CD8-positive, alpha-beta T cell (primary cell): ENCODE measurements at regions of chr5 and their contacts with region 1.

Region 1: GRCh38 chr5:138575194-138576015 is at the start of gene HSPA9:
- DNase-seq: peak; percentile 91 to 100 (median 97)
- ATAC-seq: peak; percentile 82
- H3K4me3 ChIP-seq: peak within 1 kb of the TSS; percentile 77 to 80
- H3K4me3 Mint-ChIP-seq: peak within 1 kb of the TSS; percentile 99
- H3K27ac ChIP-seq: peak within 1 kb of the TSS; percentile 98 to 99
- H3K27ac Mint-ChIP-seq: peak within 1 kb of the TSS; percentile 100
- H3K4me1 ChIP-seq: peaks cover 21% of the 10 kb centered on the region
- H3K4me1 Mint-ChIP-seq: peaks cover 43% of the 10 kb centered on the region
- H3K27me3 ChIP-seq: no peaks in the 10 kb centered on the region
- H3K27me3 Mint-ChIP-seq: no peaks in the 10 kb centered on the region
- CTCF ChIP-seq: no peak
- total RNA-seq, gene HSPA9: 464 to 500 TPM

Region 2: GRCh38 chr5:138213161-138214029 is 362.0 kb before region 1 on chr5 and contains the start of gene CDC23:
- CTCF ChIA-PET with region 1: no interaction called
- POLR2A ChIA-PET with region 1: no interaction called
- intact Hi-C with region 1: loop called in 1 of 2 experiments (anchors 10 kb)
- DNase-seq: peak; percentile 76 to 97 (median 89)
- ATAC-seq: peak; percentile 97
- H3K4me3 ChIP-seq: peak within 1 kb of the TSS; percentile 91 to 93
- H3K4me3 Mint-ChIP-seq: peak within 1 kb of the TSS; percentile 100
- H3K27ac ChIP-seq: peak within 1 kb of the TSS; percentile 81 to 86
- H3K27ac Mint-ChIP-seq: peak within 1 kb of the TSS; percentile 98
- H3K4me1 ChIP-seq: peaks cover 18% of the 10 kb centered on the region
- H3K4me1 Mint-ChIP-seq: peaks cover 21% of the 10 kb centered on the region
- H3K27me3 ChIP-seq: no peaks in the 10 kb centered on the region
- H3K27me3 Mint-ChIP-seq: peaks cover 2% of the 10 kb centered on the region
- CTCF ChIP-seq: no peak
- total RNA-seq, gene CDC23: 18.2 to 20.5 TPM

Region 3: DNA sequence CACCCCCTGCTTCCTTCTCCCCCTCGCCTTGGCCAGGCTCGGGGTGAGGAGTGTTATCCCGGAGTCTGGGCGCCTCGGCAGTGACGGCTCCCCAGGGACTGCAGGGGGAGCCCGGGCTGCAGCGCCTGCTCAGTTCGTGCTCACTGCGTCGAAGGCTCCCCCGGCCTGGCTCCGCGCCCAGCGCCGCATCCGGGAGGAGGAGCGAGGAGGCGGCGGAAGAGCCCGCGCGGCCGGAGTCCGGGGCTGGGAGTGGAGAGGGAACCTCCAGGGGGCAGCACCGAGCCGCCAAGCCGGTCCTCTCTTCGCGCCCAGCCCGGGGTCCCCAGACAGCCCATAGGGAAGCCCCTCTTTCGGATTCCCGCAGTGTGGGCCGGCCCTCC is 111.4 kb before region 1 on chr5:
- CTCF ChIA-PET with region 1: interaction called, 4 read pairs
- POLR2A ChIA-PET with region 1: interaction called, 12 read pairs
- intact Hi-C with region 1: loop called (anchors 1 kb)
- DNase-seq: peak; percentile 85 to 98 (median 93)
- ATAC-seq: peak; percentile 47
- H3K4me3 ChIP-seq: peak overlapping the region; percentile 91 to 97
- H3K4me3 Mint-ChIP-seq: peak overlapping the region; percentile 91
- H3K27ac ChIP-seq: peak overlapping the region; percentile 79 to 100
- H3K27ac Mint-ChIP-seq: peak overlapping the region; percentile 93
- H3K4me1 ChIP-seq: peaks cover 51% of the 10 kb centered on the region
- H3K4me1 Mint-ChIP-seq: peaks cover 48% of the 10 kb centered on the region
- H3K27me3 ChIP-seq: no peaks in the 10 kb centered on the region
- H3K27me3 Mint-ChIP-seq: no peaks in the 10 kb centered on the region
- CTCF ChIP-seq: peak; percentile 87

Region 4: GRCh38 chr5:138654281-138654867 is 79.0 kb after region 1 on chr5:
- CTCF ChIA-PET with region 1: interaction called, 3 read pairs
- POLR2A ChIA-PET with region 1: interaction called, 3 read pairs
- intact Hi-C with region 1: loop called (anchors 5 kb)
- DNase-seq: peak; percentile 41 to 89 (median 64)
- ATAC-seq: peak; percentile 87
- H3K4me3 ChIP-seq: no peak overlapping the region
- H3K4me3 Mint-ChIP-seq: no peak overlapping the region
- H3K27ac ChIP-seq: no peak overlapping the region
- H3K27ac Mint-ChIP-seq: peak overlapping the region; percentile 76
- H3K4me1 ChIP-seq: peaks cover 20% of the 10 kb centered on the region
- H3K4me1 Mint-ChIP-seq: peaks cover 26% of the 10 kb centered on the region
- H3K27me3 ChIP-seq: peaks cover 55 to 57% of the 10 kb centered on the region in 2 experiments
- H3K27me3 Mint-ChIP-seq: peaks cover 87% of the 10 kb centered on the region
- CTCF ChIP-seq: no peak

Region 5: DNA sequence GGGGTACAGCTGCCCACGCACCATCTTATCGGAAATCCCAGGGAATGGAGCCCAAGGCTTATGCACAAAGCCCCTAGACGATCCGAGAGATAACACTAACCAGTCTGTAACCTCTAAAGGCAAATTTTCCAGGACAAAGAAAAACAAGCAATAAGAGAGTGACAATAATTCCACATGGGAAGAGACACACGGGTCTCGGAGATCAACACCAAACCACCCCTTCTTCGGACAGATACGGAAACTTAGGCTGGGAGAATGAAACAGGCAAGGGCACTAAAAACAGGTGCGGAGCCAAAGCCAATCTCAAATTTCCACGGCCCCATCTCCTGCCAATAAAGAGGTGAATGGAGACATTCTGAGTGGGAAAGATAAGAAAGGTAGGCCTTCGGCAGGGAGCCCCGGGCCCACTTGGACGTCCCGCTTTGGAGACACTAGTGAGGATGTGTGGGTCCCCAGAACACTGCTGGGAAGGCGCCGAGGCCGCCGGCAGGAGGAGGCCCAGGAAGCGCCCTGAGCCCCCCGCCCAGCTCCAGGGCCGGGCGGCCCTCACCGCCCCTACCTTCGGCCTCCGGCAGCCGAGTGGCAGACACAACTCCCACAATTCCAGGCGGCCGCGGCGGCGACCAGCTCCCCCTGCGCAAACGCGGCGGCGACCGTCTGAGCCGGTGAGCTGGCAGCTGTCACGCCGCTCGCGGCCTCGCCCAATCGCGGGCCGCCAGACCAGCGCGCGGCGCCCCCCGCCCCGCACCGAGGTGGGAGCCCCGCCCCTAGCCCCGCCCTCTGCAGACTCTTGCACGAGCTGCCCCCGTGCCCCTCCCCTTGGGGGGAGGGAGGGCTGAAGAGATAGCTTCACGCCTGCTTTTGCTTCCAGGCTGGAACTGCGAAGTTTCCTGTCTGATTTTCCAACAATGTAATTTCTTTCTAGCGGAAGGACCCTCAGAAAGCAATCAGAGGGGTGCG is 622.6 kb after region 1 on chr5 and contains the start of gene SIL1:
- CTCF ChIA-PET with region 1: no interaction called
- POLR2A ChIA-PET with region 1: no interaction called
- intact Hi-C with region 1: loop called (anchors 1 to 5 kb)
- DNase-seq: peak; percentile 94 to 98 (median 96)
- ATAC-seq: peak; percentile 98
- H3K4me3 ChIP-seq: peak within 1 kb of the TSS; percentile 60 to 70
- H3K4me3 Mint-ChIP-seq: peak within 1 kb of the TSS; percentile 84
- H3K27ac ChIP-seq: peak within 1 kb of the TSS; percentile 82 to 84
- H3K27ac Mint-ChIP-seq: peak within 1 kb of the TSS; percentile 91
- H3K4me1 ChIP-seq: peaks cover 8% of the 10 kb centered on the region
- H3K4me1 Mint-ChIP-seq: peaks cover 24% of the 10 kb centered on the region
- H3K27me3 ChIP-seq: no peaks in the 10 kb centered on the region
- H3K27me3 Mint-ChIP-seq: no peaks in the 10 kb centered on the region
- CTCF ChIP-seq: no peak
- total RNA-seq, gene SIL1: 14.0 to 19.5 TPM

Region 6: DNA sequence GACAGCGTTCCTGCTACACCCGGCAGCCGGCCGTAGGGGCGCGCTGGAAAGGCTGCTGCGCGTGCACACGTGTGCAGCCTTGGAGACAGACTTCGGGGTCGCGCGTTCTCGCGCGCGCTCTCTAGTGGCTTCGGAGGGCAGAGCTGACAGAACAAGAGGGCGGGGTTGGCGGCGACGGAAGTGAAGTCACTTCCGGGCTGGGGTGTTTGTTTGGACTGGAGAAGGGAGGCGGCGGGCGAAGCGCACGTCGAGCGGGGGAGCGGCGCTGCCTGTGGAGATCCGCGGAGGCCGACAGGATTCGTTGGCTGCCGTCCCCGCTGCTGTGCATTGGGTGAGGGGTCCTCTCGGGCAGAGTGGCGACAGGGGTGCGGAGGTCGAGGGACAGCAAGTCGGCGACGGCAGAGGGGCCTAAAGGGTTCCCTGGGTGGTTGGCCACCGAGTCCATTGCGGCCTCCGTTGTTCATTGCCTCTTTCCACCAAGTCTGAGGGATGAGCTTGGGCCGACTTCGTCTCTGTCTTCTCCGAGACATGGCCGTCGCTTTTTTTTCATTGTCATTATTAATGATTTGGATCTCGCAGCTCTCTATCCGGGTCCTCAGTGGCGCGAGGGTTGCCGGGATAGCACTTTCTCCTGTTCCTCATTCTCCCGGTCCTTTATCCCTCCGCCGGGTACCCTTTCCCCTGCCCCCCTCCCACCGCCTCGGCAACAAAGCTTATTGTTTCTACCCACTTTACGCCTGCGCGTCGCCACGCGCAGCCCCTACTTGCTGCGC is 766.4 kb after region 1 on chr5 and contains the start of gene PAIP2:
- CTCF ChIA-PET with region 1: no interaction called
- POLR2A ChIA-PET with region 1: interaction called, 14 read pairs
- intact Hi-C with region 1: loop called in 1 of 2 experiments (anchors 5 kb)
- DNase-seq: peak; percentile 96 to 99 (median 98)
- ATAC-seq: peak; percentile 79
- H3K4me3 ChIP-seq: peak within 1 kb of the TSS; percentile 92 to 100
- H3K4me3 Mint-ChIP-seq: peak within 1 kb of the TSS; percentile 99
- H3K27ac ChIP-seq: peak within 1 kb of the TSS; percentile 100
- H3K27ac Mint-ChIP-seq: peak within 1 kb of the TSS; percentile 100
- H3K4me1 ChIP-seq: peaks cover 36% of the 10 kb centered on the region
- H3K4me1 Mint-ChIP-seq: peaks cover 48% of the 10 kb centered on the region
- H3K27me3 ChIP-seq: no peaks in the 10 kb centered on the region
- H3K27me3 Mint-ChIP-seq: no peaks in the 10 kb centered on the region
- CTCF ChIP-seq: peak; percentile 68
- total RNA-seq, gene PAIP2: 173 to 179 TPM